ENCODE measurements at regions of chr3 and their contacts with region 1.

Region 1: GRCh38 chr3:170918715-170919114 is 10.3 kb upstream of the EIF5A2 start:
- DNase-seq: no peak
- H3K4me3 ChIP-seq: no peak overlapping the region
- H3K27ac ChIP-seq: no peak overlapping the region
- H3K4me1 ChIP-seq: no peaks in the 10 kb centered on the region
- H3K27me3 ChIP-seq: no peaks in the 10 kb centered on the region
- CTCF ChIP-seq: no peak
- POLR2A ChIP-seq: no peak

Region 2: DNA sequence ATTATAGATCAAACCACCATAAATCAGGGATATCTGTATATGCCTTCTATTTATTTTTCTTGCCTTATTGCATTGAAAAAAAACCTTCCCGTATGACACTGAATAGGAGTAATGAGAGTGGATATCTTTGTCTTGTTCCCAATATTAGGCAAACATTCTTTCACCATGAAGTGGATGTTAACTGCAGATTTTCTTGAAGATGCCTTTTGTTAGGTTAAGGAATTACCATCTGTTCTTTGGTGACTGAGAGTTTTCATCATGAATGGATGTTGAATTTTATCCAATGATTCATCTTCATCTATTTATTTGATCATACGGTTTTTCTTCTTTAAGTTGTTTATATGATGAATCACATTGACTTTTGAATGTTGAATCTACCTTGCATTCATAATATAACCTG is 1208.1 kb before region 1 on chr3:
- intact Hi-C with region 1: loop called (anchors 10 kb)
- DNase-seq: no peak
- H3K4me3 ChIP-seq: no peak overlapping the region
- H3K27ac ChIP-seq: no peak overlapping the region
- H3K4me1 ChIP-seq: no peaks in the 10 kb centered on the region
- H3K27me3 ChIP-seq: no peaks in the 10 kb centered on the region
- CTCF ChIP-seq: no peak
- POLR2A ChIP-seq: no peak

Region 3: GRCh38 chr3:170644711-170645110 is 274.0 kb before region 1 on chr3:
- intact Hi-C with region 1: no loop called
- DNase-seq: no peak
- H3K4me3 ChIP-seq: no peak overlapping the region
- H3K27ac ChIP-seq: no peak overlapping the region
- H3K4me1 ChIP-seq: no peaks in the 10 kb centered on the region
- H3K27me3 ChIP-seq: no peaks in the 10 kb centered on the region
- CTCF ChIP-seq: no peak
- POLR2A ChIP-seq: no peak

Measured in breast epithelium (tissue), 4 donors.